ENCODE measurements at regions of chr4 and their contacts with region 1.

Region 1: DNA sequence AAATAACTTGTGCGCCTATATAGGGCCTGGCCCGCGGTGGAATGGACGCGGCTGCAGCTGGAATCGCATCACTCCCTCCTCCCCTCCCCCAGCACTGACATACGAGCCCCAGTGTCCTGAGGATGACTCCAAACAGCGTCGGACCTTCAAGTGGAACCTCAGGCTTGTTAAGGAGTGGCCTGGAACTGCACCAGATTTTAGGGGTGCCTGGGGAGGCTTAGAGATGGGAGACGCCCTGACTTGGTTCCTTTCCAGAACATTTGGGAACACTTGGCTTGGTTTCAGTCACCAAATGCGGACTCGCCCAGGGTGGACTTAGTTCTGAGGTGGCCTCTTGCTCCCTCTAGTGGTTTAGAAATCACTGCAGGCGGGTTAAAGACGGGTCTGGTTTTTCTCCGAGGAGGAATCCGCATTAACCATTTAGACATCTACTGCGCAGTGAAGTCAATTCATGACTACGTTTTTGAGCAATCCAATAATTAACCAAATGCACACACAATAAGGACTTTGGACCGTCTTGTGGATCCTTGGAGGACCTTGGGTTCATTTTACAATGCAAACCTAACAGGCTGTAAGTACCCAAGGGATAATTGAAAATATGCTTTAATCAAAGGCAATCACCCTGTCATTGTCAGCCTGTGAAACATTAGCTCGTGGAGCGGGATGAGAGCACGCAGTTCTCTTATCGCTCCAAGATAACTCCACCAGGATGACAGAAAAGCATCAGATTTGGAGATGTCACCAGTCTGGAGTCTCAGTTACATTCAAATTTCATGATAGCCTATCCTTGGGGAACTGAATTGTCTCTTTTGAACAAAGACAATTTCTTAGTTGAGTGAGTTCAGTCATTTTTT is 11.2 kb upstream of the PDGFRA start:
- DNase-seq: peak; percentile 91 to 95
- H3K4me3 ChIP-seq: no peak overlapping the region
- CTCF ChIP-seq: peak in 1 of 3 donors; percentile 82
- POLR2A ChIP-seq: no peak

Region 2: DNA sequence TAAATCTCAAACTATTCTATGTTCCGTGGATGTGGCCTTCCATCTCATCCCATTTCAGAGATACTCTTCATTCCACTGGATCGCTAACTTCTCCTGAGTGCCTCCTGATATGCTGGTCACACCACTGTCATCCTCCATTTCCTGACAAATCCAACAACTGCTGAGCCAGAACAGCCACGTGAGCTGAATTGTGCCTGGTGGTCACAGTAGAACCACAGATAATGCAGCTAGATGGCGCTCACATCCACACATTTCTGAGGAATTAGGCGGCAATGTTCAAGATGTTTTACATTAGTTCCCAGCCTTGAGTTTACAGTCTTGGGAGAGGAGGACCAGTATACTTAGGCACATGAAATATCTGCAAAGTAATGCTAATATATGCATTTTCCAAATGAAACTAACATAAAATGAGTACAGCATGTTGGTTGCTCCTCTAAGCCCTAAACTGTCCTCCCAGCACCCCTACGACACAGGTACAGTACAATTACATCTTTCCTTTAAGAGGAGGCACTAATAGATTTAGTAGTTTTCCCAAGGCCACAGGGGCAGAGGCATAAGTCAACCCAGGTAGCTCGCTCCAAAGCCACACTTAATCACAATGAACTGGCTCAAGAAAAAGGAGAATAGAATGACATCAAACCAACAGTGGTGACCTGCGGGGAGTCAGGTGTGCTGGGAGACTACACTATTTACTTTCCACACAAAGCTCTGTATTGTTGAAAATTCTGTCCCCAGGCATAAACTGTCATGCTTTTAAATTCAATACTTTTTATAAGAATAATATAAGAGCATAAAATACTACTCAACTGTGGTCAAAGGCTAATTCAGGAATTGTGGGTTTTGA is 287.7 kb before region 1 on chr4:
- intact Hi-C with region 1: loop called (anchors 2 kb)
- DNase-seq: peak; percentile 81 to 91
- H3K4me3 ChIP-seq: no peak overlapping the region
- CTCF ChIP-seq: no peak
- POLR2A ChIP-seq: no peak

Region 3: DNA sequence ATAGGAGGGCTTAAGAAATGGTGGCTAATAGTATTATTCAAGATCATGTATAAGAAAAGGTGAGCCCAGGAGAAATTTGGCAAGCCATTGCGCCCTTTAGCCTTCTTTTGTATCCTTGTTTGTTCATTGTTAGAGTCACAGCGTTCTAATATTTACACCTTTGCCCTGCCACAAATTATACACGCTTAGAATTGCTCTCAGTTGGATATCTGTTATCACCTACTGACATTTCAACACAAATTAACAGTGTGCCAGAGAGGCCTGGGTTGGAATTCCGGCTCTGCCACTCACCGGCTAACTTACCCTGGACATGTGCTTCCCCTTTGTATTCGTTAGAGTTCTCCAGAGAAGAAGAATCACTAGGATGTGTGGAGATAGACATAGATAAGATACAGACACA is 291.2 kb after region 1 on chr4:
- intact Hi-C with region 1: no loop called
- DNase-seq: no peak
- H3K4me3 ChIP-seq: no peak overlapping the region
- CTCF ChIP-seq: no peak
- POLR2A ChIP-seq: no peak